GM10248 (cell line): ENCODE measurements at regions of chr1 and their contacts with region 1.

Region 1: GRCh38 chr1:220733090-220733601 is 15.0 kb upstream of the MTARC2 start:
- DNase-seq: peak; percentile 73
- CTCF ChIP-seq: peak; percentile 54

Region 2: GRCh38 chr1:220281159-220281574 is 452.0 kb before region 1 on chr1:
- CTCF ChIA-PET with region 1: interaction called, 28 read pairs
- POLR2A ChIA-PET with region 1: no interaction called
- DNase-seq: no peak
- CTCF ChIP-seq: peak; percentile 12

Region 3: GRCh38 chr1:220300442-220301121 is 432.6 kb before region 1 on chr1:
- CTCF ChIA-PET with region 1: interaction called, 16 read pairs
- POLR2A ChIA-PET with region 1: no interaction called
- DNase-seq: no peak
- CTCF ChIP-seq: no peak

Region 4: GRCh38 chr1:220700556-220701179 is 32.5 kb before region 1 on chr1:
- CTCF ChIA-PET with region 1: interaction called, 15 read pairs
- POLR2A ChIA-PET with region 1: no interaction called
- DNase-seq: no peak
- CTCF ChIP-seq: no peak

Region 5: GRCh38 chr1:220748089-220748934 is 15.2 kb after region 1 on chr1 and contains the start of gene MTARC2:
- CTCF ChIA-PET with region 1: interaction called, 35 read pairs
- POLR2A ChIA-PET with region 1: no interaction called
- DNase-seq: peak; percentile 52
- CTCF ChIP-seq: no peak

Region 6: GRCh38 chr1:220755309-220755708 is 22.2 kb after region 1 on chr1:
- CTCF ChIA-PET with region 1: interaction called, 22 read pairs
- POLR2A ChIA-PET with region 1: no interaction called
- DNase-seq: peak; percentile 3
- CTCF ChIP-seq: no peak